ENCODE measurements at regions of chr14 and their contacts with region 1.

Region 1: GRCh38 chr14:88962356-88962755 is 137.9 kb downstream of the TTC8 start:
- DNase-seq: no peak
- ATAC-seq: no peak
- H3K4me3 ChIP-seq: no peak overlapping the region
- H3K4me3 Mint-ChIP-seq: no peak overlapping the region
- H3K27ac ChIP-seq: no peak overlapping the region
- H3K27ac Mint-ChIP-seq: no peak overlapping the region
- H3K4me1 ChIP-seq: no peaks in the 10 kb centered on the region
- H3K4me1 Mint-ChIP-seq: no peaks in the 10 kb centered on the region
- H3K27me3 ChIP-seq: no peaks in the 10 kb centered on the region
- H3K27me3 Mint-ChIP-seq: peaks cover 9% of the 10 kb centered on the region
- CTCF ChIP-seq: no peak

Region 2: DNA sequence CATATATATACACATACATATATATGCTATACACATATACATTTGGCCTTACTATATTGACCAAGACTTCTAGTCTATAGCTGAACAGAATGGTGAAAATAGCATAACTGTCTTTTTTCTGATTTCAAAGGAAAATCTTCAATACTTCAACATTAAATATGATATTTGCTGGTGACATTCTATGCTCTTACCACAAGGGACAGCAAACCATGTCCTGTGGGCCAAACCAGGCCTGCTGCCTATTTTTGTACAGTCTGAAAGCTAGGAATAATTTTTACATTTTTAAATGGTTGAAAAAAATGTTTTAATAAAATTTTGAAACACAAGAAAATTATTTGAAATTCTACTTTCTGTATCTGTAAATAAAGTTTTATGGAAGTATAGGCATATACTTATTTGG is 233.2 kb before region 1 on chr14:
- CTCF ChIA-PET with region 1: no interaction called
- POLR2A ChIA-PET with region 1: no interaction called
- intact Hi-C with region 1: no loop called
- DNase-seq: no peak
- ATAC-seq: no peak
- H3K4me3 ChIP-seq: no peak overlapping the region
- H3K4me3 Mint-ChIP-seq: no peak overlapping the region
- H3K27ac ChIP-seq: no peak overlapping the region
- H3K27ac Mint-ChIP-seq: no peak overlapping the region
- H3K4me1 ChIP-seq: no peaks in the 10 kb centered on the region
- H3K4me1 Mint-ChIP-seq: no peaks in the 10 kb centered on the region
- H3K27me3 ChIP-seq: no peaks in the 10 kb centered on the region
- H3K27me3 Mint-ChIP-seq: no peaks in the 10 kb centered on the region
- CTCF ChIP-seq: no peak

Region 3: DNA sequence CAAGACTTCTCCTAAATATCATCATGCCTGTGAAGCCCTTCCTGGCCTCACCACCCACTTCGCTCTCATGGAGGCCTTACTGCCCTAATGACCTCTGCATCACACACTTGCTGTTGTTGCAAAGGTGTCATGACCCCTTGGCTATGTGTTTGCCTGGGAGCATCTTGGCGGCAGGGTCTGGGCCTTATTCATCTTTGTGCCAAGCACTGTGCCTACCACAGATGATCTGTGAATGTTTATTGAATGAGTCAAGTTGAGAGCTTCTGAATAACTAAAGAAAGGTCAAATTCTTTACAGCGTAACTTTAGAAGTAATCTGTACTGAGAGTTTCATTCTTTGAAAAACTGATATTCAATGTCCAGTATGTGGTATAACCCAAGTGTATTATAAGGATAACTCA is 24.6 kb before region 1 on chr14:
- CTCF ChIA-PET with region 1: no interaction called
- POLR2A ChIA-PET with region 1: no interaction called
- intact Hi-C with region 1: loop called in 1 of 2 experiments (anchors 1 kb)
- DNase-seq: no peak
- ATAC-seq: no peak
- H3K4me3 ChIP-seq: no peak overlapping the region
- H3K4me3 Mint-ChIP-seq: no peak overlapping the region
- H3K27ac ChIP-seq: no peak overlapping the region
- H3K27ac Mint-ChIP-seq: no peak overlapping the region
- H3K4me1 ChIP-seq: no peaks in the 10 kb centered on the region
- H3K4me1 Mint-ChIP-seq: no peaks in the 10 kb centered on the region
- H3K27me3 ChIP-seq: peaks cover 0 to 3% of the 10 kb centered on the region in 2 experiments
- H3K27me3 Mint-ChIP-seq: peaks cover 25% of the 10 kb centered on the region
- CTCF ChIP-seq: no peak

Region 4: DNA sequence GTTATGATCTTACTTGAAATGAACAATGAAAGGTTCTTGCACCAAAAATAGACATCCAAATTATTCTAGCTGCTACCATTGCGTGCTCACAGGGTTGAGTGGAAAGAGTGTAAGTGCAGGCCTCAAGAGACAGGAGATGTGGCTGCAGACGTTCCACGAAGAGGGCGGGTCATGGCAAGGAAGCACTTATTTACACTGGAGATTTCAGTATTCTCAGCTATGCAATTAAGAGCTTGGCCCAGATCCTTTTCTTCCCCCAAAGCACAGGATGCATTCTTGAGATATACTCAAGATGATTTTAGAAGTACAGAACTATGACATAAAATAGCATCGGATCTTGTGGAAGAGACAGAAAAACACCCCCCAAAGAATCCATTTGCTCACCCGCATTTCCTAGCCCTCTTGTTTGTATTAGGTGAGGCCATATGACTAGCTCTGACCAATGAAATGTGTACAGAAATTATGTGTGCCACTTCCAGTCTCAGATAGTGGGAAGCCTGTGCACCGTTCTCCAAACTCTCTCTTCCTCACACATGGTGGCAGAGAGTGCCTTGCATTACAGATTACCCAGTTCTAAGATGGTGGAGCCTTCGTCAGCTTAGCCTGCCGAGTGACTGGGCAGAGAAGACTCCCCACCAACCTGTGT is 123.5 kb after region 1 on chr14:
- CTCF ChIA-PET with region 1: no interaction called
- POLR2A ChIA-PET with region 1: no interaction called
- intact Hi-C with region 1: no loop called
- DNase-seq: no peak
- ATAC-seq: no peak
- H3K4me3 ChIP-seq: no peak overlapping the region
- H3K4me3 Mint-ChIP-seq: no peak overlapping the region
- H3K27ac ChIP-seq: no peak overlapping the region
- H3K27ac Mint-ChIP-seq: no peak overlapping the region
- H3K4me1 ChIP-seq: no peaks in the 10 kb centered on the region
- H3K4me1 Mint-ChIP-seq: no peaks in the 10 kb centered on the region
- H3K27me3 ChIP-seq: no peaks in the 10 kb centered on the region
- H3K27me3 Mint-ChIP-seq: no peaks in the 10 kb centered on the region
- CTCF ChIP-seq: no peak